GM13977 (cell line): ENCODE measurements at regions of chr6 and their contacts with region 1.

Region 1: GRCh38 chr6:17417817-17418216 is 24.4 kb downstream of the CAP2 start:
- DNase-seq: no peak
- CTCF ChIP-seq: no peak

Region 2: GRCh38 chr6:16982807-16983206 is 435.0 kb before region 1 on chr6:
- in situ Hi-C with region 1: no loop called
- DNase-seq: peak; percentile 7
- CTCF ChIP-seq: no peak

Region 3: GRCh38 chr6:17311595-17312311 is 106.1 kb before region 1 on chr6:
- in situ Hi-C with region 1: loop called (anchors 25 kb)
- DNase-seq: no peak
- CTCF ChIP-seq: no peak